ENCODE measurements at regions of chr3 and their contacts with region 1.

Region 1: DNA sequence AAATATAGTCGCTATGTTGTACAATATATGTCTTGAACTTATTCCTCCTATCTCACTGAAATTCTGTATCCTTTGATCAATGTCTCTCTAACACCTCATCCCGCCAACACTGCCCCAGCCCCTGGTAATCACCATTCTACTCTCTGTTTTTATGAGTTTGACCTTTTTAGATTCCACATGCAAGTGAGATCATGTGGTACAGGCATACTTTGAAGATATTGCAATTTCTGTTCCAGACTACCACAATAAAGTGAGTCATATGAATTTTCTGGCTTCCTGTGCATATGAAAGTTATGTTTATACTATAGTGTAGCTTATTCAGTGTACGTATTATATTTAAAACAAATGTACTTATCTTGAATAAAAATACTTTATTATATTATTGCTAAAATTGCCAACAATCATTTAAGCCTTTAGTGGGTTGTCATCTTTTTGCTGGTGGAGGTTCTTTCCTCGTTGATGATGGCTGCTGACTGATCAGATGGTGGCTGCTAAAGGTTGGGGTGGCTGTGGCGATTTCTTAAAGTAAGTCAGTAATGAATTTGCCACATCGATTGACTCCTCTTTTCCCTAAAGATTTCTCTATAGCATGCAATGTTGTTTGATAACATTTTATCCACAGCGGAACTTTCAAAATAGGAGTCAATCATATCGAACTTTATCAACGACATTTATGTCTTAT is 257.2 kb downstream of the NFKBIZ start:
- DNase-seq: peak; percentile 72
- H3K4me3 ChIP-seq: no peak overlapping the region
- H3K27ac ChIP-seq: peak overlapping the region; percentile 43
- H3K4me1 ChIP-seq: peaks cover 8% of the 10 kb centered on the region
- H3K27me3 ChIP-seq: no peaks in the 10 kb centered on the region
- CTCF ChIP-seq: no peak
- POLR2A ChIP-seq: no peak

Region 2: GRCh38 chr3:102124301-102125158 is 18.0 kb after region 1 on chr3:
- CTCF ChIA-PET with region 1: no interaction called
- POLR2A ChIA-PET with region 1: no interaction called
- dilution Hi-C with region 1: no loop called
- intact Hi-C with region 1: loop called (anchors 2 kb)
- DNase-seq: no peak
- H3K4me3 ChIP-seq: no peak overlapping the region
- H3K27ac ChIP-seq: no peak overlapping the region
- H3K4me1 ChIP-seq: peaks cover under 1% of the 10 kb centered on the region
- H3K27me3 ChIP-seq: no peaks in the 10 kb centered on the region
- CTCF ChIP-seq: no peak
- POLR2A ChIP-seq: no peak